ENCODE measurements at regions of chr4 and their contacts with region 1.

Region 1: DNA sequence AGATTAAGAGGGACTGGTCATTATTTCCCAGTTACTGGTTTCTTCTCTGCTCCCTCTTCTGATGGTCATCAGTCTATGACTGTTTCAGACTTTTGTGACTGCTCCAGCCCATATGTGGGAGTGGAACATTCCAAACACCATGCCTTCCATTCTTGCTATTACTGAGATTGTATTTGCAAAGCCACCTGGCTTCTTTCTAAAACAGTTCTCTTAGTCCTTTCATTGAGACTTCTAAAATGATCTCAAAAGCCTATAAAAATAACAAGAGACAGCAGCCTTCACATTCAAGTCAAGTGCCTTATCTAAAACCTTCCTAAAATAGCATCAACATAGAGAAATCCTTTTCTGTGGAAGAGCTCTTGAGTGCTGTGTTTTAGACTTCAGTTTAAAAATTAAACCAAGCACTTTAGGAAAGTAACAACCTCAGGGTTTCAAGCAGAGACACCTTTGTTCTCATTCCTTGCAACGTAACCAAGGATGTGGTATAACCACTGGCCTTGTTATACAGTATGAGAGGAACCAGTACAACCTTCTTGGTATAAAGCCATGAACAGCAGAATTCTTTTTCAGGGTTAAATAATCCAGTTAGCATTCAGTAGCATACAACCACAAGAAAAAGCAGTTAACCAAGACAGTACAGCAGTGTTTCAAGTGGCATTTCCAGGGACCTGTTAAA is 97.1 kb downstream of the NFKB1 start:
- DNase-seq: peak; percentile 36
- H3K4me3 Mint-ChIP-seq: peak overlapping the region; percentile 25
- H3K27ac Mint-ChIP-seq: peak overlapping the region; percentile 88
- H3K4me1 Mint-ChIP-seq: peaks cover 67% of the 10 kb centered on the region
- H3K27me3 Mint-ChIP-seq: no peaks in the 10 kb centered on the region

Region 2: GRCh38 chr4:102321260-102321995 is 276.8 kb before region 1 on chr4:
- CTCF ChIA-PET with region 1: no interaction called
- intact Hi-C with region 1: no loop called
- DNase-seq: no peak
- H3K4me3 Mint-ChIP-seq: no peak overlapping the region
- H3K27ac Mint-ChIP-seq: no peak overlapping the region
- H3K4me1 Mint-ChIP-seq: peaks cover 32% of the 10 kb centered on the region
- H3K27me3 Mint-ChIP-seq: no peaks in the 10 kb centered on the region

Region 3: DNA sequence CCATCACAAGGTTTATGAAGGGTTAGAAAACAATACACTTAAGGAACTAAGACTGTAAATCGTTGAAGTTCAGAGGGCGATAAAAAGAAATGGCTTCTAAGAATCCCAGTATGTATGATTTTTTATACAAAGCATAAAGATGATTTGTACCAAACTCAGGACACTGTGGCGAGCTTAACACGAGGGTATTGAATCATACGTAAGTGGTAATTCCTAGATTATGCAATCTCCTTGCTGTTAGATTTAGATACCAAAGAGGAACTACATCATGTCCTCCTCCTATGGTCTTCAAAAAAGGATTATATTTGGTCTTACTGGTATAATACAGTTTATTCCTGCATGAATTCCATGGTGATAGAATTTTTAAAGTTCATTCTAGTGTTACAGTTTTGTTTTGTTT is 73.1 kb before region 1 on chr4:
- CTCF ChIA-PET with region 1: interaction called, 3 read pairs
- intact Hi-C with region 1: loop called (anchors 1 kb)
- DNase-seq: peak; percentile 22
- H3K4me3 Mint-ChIP-seq: peak overlapping the region; percentile 47
- H3K27ac Mint-ChIP-seq: peak overlapping the region; percentile 83
- H3K4me1 Mint-ChIP-seq: peaks cover 88% of the 10 kb centered on the region
- H3K27me3 Mint-ChIP-seq: no peaks in the 10 kb centered on the region

Region 4: DNA sequence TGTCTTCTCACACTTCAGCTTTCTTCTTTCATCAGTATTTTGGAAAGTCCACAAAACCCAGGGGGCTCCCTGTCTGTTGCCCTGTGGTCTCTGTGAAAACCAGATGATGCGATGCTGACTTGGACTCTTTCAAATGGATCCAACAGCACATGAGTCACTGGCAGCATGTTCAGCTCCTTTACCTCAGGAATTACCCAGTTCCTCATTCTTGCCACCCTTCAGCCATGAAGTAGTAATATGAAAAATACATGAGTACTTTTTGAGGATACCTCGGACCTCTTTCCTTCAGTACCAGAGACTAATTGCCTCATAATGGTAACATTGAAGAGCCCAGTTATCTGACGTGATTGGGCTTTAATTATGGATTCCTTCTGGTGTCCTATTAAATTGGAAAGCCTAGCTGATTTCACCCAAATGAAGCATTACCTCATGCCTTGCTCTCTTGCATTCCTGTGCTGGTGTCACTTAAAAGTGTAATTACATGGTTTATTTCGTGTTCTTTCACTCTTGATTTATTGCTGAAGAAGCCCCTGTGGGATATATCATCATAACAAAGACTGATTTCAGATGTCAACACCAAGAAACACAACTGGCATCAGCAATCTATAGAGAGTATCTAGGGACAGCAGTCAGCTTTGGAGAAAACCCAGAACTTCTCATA is 33.7 kb before region 1 on chr4:
- CTCF ChIA-PET with region 1: no interaction called
- intact Hi-C with region 1: loop called (anchors 1 kb)
- DNase-seq: peak; percentile 66
- H3K4me3 Mint-ChIP-seq: no peak overlapping the region
- H3K27ac Mint-ChIP-seq: peak overlapping the region; percentile 75
- H3K4me1 Mint-ChIP-seq: peaks cover 78% of the 10 kb centered on the region
- H3K27me3 Mint-ChIP-seq: no peaks in the 10 kb centered on the region

Region 5: DNA sequence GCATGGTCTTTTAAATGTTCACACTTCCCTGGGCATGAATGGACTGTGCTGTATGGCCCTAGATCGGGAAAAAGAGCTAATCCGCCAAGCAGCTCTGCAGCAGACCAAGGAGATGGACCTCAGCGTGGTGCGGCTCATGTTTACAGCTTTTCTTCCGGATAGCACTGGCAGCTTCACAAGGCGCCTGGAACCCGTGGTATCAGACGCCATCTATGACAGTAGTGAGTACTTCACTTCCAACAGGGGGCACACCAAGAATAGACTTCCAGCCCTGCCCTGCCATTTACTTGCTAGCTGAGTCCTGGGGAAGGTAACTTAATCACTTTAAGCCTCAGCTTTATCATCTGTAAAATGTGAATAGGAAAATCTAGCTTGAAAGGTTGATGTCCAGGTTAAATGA is 19.4 kb before region 1 on chr4:
- CTCF ChIA-PET with region 1: interaction called, 4 read pairs
- intact Hi-C with region 1: loop called (anchors 1 kb)
- DNase-seq: peak; percentile 24
- H3K4me3 Mint-ChIP-seq: no peak overlapping the region
- H3K27ac Mint-ChIP-seq: no peak overlapping the region
- H3K4me1 Mint-ChIP-seq: peaks cover 65% of the 10 kb centered on the region
- H3K27me3 Mint-ChIP-seq: no peaks in the 10 kb centered on the region

Region 6: GRCh38 chr4:102585329-102585728 is 12.9 kb before region 1 on chr4:
- CTCF ChIA-PET with region 1: interaction called, 3 read pairs
- intact Hi-C with region 1: loop called (anchors 1 kb)
- DNase-seq: peak; percentile 60
- H3K4me3 Mint-ChIP-seq: no peak overlapping the region
- H3K27ac Mint-ChIP-seq: peak overlapping the region; percentile 78
- H3K4me1 Mint-ChIP-seq: peaks cover 72% of the 10 kb centered on the region
- H3K27me3 Mint-ChIP-seq: no peaks in the 10 kb centered on the region

Measured in activated naive CD4-positive, alpha-beta T cell treated with anti-CD3 and anti-CD28 coated beads for 36 hours (primary cell).